T-cell (primary cell): ENCODE measurements at regions of chr17 and their contacts with region 1.

Region 1: DNA sequence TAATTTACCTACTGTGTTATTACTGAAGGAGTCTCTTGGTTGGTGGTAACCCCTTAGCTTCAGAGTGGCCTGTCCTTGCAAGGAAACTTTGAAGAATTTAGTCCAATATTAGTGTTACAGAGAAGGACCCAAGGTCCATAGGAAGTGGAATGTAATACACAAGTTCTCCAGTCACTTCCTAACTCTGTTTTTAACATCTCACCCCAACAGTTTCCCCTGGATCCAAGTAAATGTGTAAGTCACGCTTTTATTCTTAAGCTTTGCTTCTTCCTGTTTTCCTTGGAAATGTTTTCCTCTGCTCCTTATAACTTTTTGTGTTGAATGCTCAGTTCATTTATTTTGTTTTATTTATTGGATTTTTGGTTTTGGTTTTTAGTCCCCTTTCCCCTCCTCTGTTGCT is 25.9 kb upstream of the RPRML start:
- DNase-seq: no peak
- ATAC-seq: no peak
- H3K4me3 ChIP-seq: no peak overlapping the region
- H3K4me3 Mint-ChIP-seq: no peak overlapping the region
- H3K27ac ChIP-seq: no peak overlapping the region
- H3K27ac Mint-ChIP-seq: no peak overlapping the region
- H3K4me1 ChIP-seq: peaks cover 0 to 8% of the 10 kb centered on the region in 2 experiments
- H3K4me1 Mint-ChIP-seq: peaks cover 0 to 6% (median 5%) of the 10 kb centered on the region in 3 donors
- H3K27me3 ChIP-seq: peaks cover 0 to 2% of the 10 kb centered on the region in 2 experiments
- H3K27me3 Mint-ChIP-seq: no peaks in the 10 kb centered on the region

Region 2: DNA sequence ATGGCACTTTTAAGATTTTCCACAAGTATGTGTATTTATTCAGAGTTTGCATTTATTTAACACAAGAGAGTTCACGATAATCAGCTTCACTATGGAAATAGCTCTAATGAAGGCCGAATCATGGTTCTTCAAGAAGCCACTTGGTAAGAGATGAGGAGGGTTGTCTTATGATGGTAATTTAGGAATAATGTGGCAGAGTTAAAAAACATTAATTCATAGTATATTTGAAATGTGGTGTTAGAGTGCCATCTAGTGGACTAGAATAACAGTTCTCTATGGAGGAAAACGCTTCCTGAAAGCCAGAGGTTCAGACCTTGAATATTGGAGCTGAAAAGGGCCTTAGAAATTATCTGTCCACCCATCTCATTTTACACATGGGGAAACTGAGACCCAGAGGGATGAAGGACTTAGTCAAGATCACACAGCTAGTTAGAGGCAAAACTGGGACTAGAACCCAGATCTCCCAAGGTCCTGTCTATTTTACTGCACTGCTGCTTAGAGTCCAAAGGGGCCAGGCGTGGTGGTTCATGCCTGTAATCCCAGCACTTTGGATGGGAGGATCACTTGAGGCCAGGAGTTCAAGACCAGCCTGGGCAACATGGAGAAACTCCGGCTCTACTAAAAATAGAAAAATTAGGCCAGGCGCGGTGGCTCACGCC is 611.0 kb after region 1 on chr17:
- CTCF ChIA-PET with region 1: interaction called in 1 of 2 experiments, 14 read pairs
- POLR2A ChIA-PET with region 1: no interaction called
- DNase-seq: peak in 3 of 35 experiments; percentile 5 to 78 (median 18)
- ATAC-seq: peak; percentile 34 to 63 (median 54)
- H3K4me3 ChIP-seq: no peak overlapping the region
- H3K4me3 Mint-ChIP-seq: no peak overlapping the region
- H3K27ac ChIP-seq: no peak overlapping the region
- H3K27ac Mint-ChIP-seq: peak overlapping the region; percentile 55 to 61
- H3K4me1 ChIP-seq: no peaks in the 10 kb centered on the region
- H3K4me1 Mint-ChIP-seq: peaks cover 0 to 11% (median 10%) of the 10 kb centered on the region in 3 donors
- H3K27me3 ChIP-seq: no peaks in the 10 kb centered on the region
- H3K27me3 Mint-ChIP-seq: no peaks in the 10 kb centered on the region